ENCODE measurements at regions of chr7 and their contacts with region 1.

Region 1: DNA sequence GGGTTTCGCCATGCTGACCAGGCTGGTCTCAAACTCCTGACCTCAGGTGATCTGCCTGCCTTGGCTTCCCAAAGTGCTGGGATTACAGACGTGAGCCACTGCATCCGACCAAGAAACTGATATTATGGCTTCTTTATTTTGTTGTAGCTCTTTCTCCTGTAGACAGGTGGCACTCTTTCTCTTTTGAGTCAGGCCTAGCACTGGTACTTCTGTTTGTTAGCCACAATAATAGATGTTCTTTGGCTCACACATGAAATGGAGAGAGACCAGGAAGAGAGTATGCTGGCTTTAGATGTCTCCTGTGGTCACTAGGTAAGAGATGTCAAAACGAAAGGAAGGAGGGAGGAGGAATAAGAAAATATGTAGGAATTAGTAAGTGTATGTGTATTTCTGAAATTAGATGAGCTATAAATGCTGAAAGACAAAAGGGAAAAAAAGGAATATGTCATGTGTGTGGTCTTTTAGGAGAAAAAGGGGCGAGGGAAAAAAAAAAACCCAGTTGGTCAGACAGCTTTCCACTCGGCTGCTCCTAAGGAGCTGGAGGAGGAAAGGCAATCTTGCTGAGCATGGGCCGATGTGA is 78.7 kb downstream of the CLEC2L start:
- DNase-seq: no peak
- H3K4me3 Mint-ChIP-seq: no peak overlapping the region
- H3K27ac Mint-ChIP-seq: no peak overlapping the region
- H3K4me1 Mint-ChIP-seq: no peaks in the 10 kb centered on the region
- H3K27me3 Mint-ChIP-seq: no peaks in the 10 kb centered on the region

Region 2: GRCh38 chr7:139582671-139583155 is 19.5 kb before region 1 on chr7:
- CTCF ChIA-PET with region 1: interaction called, 10 read pairs
- POLR2A ChIA-PET with region 1: interaction called, 3 read pairs
- intact Hi-C with region 1: no loop called
- DNase-seq: no peak
- H3K4me3 Mint-ChIP-seq: no peak overlapping the region
- H3K27ac Mint-ChIP-seq: no peak overlapping the region
- H3K4me1 Mint-ChIP-seq: no peaks in the 10 kb centered on the region
- H3K27me3 Mint-ChIP-seq: no peaks in the 10 kb centered on the region

Region 3: GRCh38 chr7:139588632-139589031 is 13.6 kb before region 1 on chr7:
- CTCF ChIA-PET with region 1: interaction called, 12 read pairs
- POLR2A ChIA-PET with region 1: interaction called, 3 read pairs
- intact Hi-C with region 1: no loop called
- DNase-seq: no peak
- H3K4me3 Mint-ChIP-seq: no peak overlapping the region
- H3K27ac Mint-ChIP-seq: no peak overlapping the region
- H3K4me1 Mint-ChIP-seq: peaks cover 4% of the 10 kb centered on the region
- H3K27me3 Mint-ChIP-seq: no peaks in the 10 kb centered on the region

Region 4: DNA sequence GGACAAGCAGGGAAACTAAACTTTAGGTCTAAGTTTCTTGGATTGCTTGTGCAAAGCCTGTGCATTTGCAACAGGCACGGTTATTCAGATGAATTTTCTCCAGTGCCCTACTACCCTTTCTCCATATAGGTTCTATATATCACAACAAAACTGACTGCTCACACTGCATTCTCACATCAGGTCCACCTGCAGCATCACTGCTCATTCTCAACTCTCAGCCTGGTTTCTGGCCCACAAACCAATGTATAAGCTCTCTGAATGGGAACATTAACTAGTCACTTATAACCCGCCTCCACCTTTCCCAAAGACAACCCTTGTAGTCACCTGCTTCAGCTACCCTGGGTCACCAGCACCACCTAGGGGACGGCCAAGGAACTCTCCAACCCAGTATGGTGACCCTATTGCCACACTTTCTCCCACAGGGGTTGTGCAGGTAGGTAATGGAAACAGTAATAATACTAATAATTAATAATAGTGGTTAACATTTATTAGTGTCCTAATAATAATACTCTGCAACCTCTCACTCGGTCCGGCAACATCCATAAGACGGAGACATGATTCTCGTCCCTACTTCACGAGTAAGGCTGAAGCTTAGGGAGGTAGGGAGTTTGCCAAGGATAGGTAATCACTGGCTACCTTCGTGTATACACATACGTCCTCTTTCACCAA is 18.6 kb after region 1 on chr7:
- CTCF ChIA-PET with region 1: interaction called, 32 read pairs
- POLR2A ChIA-PET with region 1: no interaction called
- intact Hi-C with region 1: loop called (anchors 2 kb)
- DNase-seq: peak; percentile 78
- H3K4me3 Mint-ChIP-seq: no peak overlapping the region
- H3K27ac Mint-ChIP-seq: no peak overlapping the region
- H3K4me1 Mint-ChIP-seq: peaks cover 12% of the 10 kb centered on the region
- H3K27me3 Mint-ChIP-seq: no peaks in the 10 kb centered on the region